Right ventricle myocardium superior (tissue), 1 donor: ENCODE measurements at regions of chr6 and their contacts with region 1.

Region 1: GRCh38 chr6:42901536-42901957 is 14.3 kb upstream of the PTCRA start:
- DNase-seq: peak; percentile 86
- ATAC-seq: peak; percentile 98

Region 2: GRCh38 chr6:42978839-42979522 is 77.4 kb after region 1 on chr6 and contains the start of gene PEX6:
- intact Hi-C with region 1: loop called (anchors 10 kb)
- DNase-seq: peak; percentile 96
- ATAC-seq: peak; percentile 96
- total RNA-seq, gene PEX6: 27.1 TPM

Region 3: DNA sequence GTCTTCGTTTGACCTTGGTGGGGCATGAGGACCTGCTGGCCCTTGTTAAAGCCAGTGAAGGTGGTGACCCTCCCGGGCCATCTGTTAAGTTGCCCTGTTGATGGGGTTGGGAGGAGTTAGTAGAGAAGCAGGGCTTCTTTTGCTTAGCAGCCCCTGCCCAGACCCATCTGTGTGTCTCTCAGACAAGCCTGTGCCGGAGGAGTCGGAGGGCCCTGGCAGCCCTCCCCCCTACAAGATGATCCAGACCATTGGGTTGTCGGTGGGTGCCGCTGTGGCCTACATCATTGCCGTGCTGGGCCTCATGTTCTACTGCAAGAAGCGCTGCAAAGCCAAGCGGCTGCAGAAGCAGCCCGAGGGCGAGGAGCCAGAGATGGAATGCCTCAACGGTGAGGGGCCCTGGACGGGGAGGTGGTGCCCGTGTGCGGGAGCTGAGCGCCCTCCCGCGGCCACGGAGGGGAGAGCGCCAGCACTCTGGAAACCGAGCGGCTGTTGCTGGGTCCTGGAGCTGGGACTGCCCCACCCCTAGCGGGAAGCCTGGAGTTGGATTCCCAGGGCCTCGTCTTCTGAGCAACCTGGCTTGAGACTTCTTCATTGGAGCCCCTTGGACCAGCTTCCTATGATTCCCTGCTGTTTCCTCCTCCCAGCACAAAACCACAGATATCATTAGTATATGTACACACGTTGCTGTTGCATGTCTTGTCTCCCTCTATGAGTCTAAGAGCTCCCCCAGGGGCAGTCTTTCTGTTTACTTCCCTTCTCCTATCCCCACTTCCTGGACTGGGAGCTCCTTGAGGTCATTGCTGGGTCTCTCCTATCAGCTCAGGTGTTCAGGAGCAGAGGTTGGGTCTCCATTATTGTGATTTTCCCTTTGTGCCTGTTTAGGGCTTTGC is 241.9 kb after region 1 on chr6:
- intact Hi-C with region 1: loop called (anchors 5 kb)
- DNase-seq: peak; percentile 92
- ATAC-seq: peak; percentile 97

Region 4: GRCh38 chr6:43334466-43335095 is 433.0 kb after region 1 on chr6:
- intact Hi-C with region 1: loop called (anchors 10 kb)
- DNase-seq: no peak
- ATAC-seq: peak; percentile 66